ENCODE measurements at regions of chr7 and their contacts with region 1.

Region 1: DNA sequence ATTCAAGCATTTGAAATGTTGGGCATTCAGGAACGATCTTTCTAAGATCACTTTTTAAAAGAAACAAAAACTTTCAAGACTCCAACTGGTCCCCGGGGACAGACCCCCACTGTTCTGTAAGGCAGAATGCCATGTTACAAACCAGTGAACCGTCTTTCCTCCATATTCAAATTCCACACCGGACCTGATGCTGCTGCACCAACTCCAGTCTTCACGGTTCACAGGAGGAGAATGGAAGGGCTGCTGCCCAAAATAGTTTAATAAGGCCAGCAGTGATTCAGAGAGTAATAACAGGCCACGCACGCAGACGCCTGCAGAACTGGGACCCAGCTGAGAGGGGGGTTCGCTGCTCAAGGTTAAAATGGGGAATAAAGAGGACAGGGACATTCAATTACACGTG is 47.2 kb downstream of the OSBPL3 start:
- DNase-seq: no peak
- ATAC-seq: no peak; the same call in 1 of the 3 replicates
- H3K4me3 ChIP-seq: no peak overlapping the region
- H3K27ac ChIP-seq: no peak overlapping the region
- H3K4me1 ChIP-seq: peaks cover 0 to 36% of the 10 kb centered on the region in 2 experiments; a peak in 2 of 5 replicates
- H3K27me3 ChIP-seq: no peaks in the 10 kb centered on the region
- CTCF ChIP-seq: no peak
- EP300 ChIP-seq: no peak
- POLR2A ChIP-seq: no peak
- RAD21 ChIP-seq: no peak

Region 2: DNA sequence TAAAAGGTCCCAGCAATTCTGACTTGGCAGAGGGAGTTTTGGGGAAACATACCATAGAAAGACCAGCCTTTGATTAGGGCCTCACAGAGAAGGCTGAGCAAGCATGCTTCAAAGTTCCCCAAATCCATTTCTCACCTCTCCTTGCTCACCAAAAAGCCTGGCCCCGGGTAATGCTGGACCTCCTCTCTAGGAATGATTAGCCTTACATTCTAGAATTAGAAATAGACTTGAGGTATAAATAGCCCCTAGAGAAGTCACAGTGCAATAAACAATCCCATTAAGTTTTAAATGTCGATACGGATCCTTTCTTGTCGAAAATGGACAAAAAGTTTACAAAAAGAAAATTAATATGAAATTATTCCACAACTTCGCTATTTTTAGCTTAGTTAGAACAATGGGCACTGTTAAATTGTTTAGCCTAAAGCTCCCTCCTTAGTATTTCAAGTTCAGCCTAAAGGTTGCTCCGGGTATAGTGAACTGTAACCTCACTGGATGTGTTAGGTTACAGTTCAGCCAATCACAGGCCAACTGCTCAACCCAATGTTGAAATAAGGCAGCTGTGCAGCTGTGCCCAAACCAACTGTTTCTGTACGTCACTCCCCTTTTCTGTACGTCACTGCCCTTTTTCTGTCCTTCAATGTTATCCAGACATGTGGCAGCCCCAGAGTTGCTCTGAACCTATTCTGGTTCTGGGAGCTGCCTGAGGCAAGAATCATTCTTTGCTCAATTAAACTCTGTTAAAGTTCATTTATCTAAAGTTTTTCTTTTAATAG is 167.7 kb before region 1 on chr7:
- CTCF ChIA-PET with region 1: no interaction called
- POLR2A ChIA-PET with region 1: no interaction called
- in situ Hi-C with region 1: no loop called
- intact Hi-C with region 1: no loop called
- DNase-seq: no peak
- ATAC-seq: peak; percentile 62
- H3K4me3 ChIP-seq: no peak overlapping the region
- H3K27ac ChIP-seq: no peak overlapping the region
- H3K4me1 ChIP-seq: peaks cover 3 to 29% of the 10 kb centered on the region in 2 experiments; a peak in 4 of 5 replicates
- H3K27me3 ChIP-seq: no peaks in the 10 kb centered on the region
- CTCF ChIP-seq: no peak
- EP300 ChIP-seq: no peak
- POLR2A ChIP-seq: no peak
- RAD21 ChIP-seq: no peak

Region 3: GRCh38 chr7:24819916-24820689 is 112.7 kb before region 1 on chr7:
- CTCF ChIA-PET with region 1: no interaction called
- POLR2A ChIA-PET with region 1: no interaction called
- in situ Hi-C with region 1: no loop called
- intact Hi-C with region 1: no loop called
- DNase-seq: peak; percentile 83 to 94 (median 86)
- ATAC-seq: peak; percentile 95
- H3K4me3 ChIP-seq: no peak overlapping the region
- H3K27ac ChIP-seq: peak overlapping the region; percentile 80; the same call in 2 of the 3 replicates
- H3K4me1 ChIP-seq: peaks cover 9 to 22% of the 10 kb centered on the region in 2 experiments; a peak in 4 of 5 replicates
- H3K27me3 ChIP-seq: no peaks in the 10 kb centered on the region
- CTCF ChIP-seq: peak; percentile 88 to 92 (median 91)
- EP300 ChIP-seq: peak; percentile 17; the same call in 1 of the 2 replicates
- POLR2A ChIP-seq: no peak
- RAD21 ChIP-seq: peak; percentile 94 to 97

Region 4: GRCh38 chr7:24971333-24972165 is 38.7 kb after region 1 on chr7:
- CTCF ChIA-PET with region 1: no interaction called
- POLR2A ChIA-PET with region 1: no interaction called
- in situ Hi-C with region 1: no loop called
- intact Hi-C with region 1: loop called (anchors 5 kb)
- DNase-seq: peak; percentile 28 to 77 (median 55)
- ATAC-seq: peak; percentile 86
- H3K4me3 ChIP-seq: no peak overlapping the region
- H3K27ac ChIP-seq: no peak overlapping the region
- H3K4me1 ChIP-seq: peaks cover 13 to 39% of the 10 kb centered on the region in 2 experiments
- H3K27me3 ChIP-seq: no peaks in the 10 kb centered on the region
- CTCF ChIP-seq: no peak
- EP300 ChIP-seq: no peak
- POLR2A ChIP-seq: no peak
- RAD21 ChIP-seq: no peak

Region 5: DNA sequence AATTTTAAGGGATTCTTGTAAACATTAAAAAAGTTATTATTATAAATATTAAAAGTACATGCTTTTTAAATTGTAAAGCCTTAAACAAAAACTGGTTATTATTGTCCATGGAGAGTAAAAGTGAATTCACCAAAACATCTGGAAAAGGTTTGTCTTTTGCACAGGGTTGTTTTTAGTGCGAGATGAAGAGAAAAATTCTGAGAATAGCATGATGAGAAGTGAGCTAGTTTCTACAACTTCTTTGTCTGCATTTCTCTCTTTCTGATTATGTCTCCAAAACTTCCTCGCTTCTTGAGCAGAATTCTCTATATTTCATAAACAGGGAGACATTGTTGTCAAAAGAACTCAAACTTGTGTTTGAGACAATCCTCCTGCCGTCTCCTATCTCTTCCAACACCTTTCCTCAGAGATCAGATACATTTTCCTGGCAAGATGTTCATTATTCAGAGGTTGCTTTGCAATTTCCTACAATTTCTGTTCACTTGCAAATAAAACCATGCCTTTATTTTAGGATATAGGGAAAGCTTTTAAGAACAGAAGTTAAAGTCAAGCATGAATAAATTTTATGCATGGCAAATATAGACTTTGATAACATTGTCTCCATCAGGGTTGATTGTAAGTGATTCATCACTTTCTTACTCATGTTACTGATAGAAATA is 667.6 kb after region 1 on chr7:
- CTCF ChIA-PET with region 1: no interaction called
- POLR2A ChIA-PET with region 1: no interaction called
- in situ Hi-C with region 1: no loop called
- intact Hi-C with region 1: no loop called
- DNase-seq: no peak
- ATAC-seq: no peak
- H3K4me3 ChIP-seq: no peak overlapping the region
- H3K27ac ChIP-seq: no peak overlapping the region
- H3K4me1 ChIP-seq: no peaks in the 10 kb centered on the region; a peak in 1 of 5 replicates
- H3K27me3 ChIP-seq: peaks cover 0 to 15% of the 10 kb centered on the region in 2 experiments; a peak in 4 of 5 replicates
- CTCF ChIP-seq: no peak
- EP300 ChIP-seq: no peak
- POLR2A ChIP-seq: no peak
- RAD21 ChIP-seq: no peak